Right ventricle myocardium superior (tissue), 1 donor: ENCODE measurements at regions of chr2 and their contacts with region 1.

Region 1: DNA sequence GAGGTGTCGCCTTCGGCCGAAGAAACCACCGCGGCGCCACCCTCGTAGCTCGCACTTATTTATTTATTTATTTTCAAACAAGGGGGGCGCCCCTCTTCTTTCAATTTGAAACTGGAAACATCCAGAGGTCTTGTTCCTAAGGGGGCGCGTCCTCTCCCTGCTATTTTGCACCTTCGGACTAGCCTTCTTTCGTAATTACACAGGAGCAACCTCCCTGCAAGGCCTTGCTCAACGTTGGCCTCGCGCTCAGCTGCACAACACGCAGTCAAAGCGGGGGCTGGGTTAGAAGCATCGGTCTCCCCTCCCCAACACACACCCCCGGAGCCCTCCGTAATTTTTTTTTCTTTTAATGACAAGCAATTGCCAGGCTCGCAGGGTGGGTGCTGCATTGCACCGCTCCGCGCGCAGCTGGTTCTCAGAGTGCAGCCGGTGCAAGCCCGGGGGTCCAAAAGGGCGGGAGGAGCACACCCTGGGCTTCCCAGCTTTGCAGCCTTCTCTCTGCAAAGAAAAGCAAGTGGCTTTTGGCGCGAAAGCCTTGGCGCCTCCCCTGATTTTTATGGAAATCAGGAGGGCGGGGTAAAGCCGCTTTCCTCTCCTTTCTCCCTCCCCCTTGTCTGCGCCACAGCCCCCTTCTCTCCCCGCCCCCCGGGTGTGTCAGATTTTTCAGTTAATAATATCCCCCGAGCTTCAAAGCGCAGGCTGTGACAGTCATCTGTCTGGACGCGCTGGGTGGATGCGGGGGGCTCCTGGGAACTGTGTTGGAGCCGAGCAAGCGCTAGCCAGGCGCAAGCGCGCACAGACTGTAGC is at the start of gene MYCN:
- DNase-seq: peak; percentile 53
- ATAC-seq: peak; percentile 46
- total RNA-seq, gene MYCN: 0.24 TPM

Region 2: GRCh38 chr2:16281451-16282336 is 341.6 kb after region 1 on chr2:
- intact Hi-C with region 1: loop called (anchors 5 kb)
- DNase-seq: no peak
- ATAC-seq: peak; percentile 67

Region 3: DNA sequence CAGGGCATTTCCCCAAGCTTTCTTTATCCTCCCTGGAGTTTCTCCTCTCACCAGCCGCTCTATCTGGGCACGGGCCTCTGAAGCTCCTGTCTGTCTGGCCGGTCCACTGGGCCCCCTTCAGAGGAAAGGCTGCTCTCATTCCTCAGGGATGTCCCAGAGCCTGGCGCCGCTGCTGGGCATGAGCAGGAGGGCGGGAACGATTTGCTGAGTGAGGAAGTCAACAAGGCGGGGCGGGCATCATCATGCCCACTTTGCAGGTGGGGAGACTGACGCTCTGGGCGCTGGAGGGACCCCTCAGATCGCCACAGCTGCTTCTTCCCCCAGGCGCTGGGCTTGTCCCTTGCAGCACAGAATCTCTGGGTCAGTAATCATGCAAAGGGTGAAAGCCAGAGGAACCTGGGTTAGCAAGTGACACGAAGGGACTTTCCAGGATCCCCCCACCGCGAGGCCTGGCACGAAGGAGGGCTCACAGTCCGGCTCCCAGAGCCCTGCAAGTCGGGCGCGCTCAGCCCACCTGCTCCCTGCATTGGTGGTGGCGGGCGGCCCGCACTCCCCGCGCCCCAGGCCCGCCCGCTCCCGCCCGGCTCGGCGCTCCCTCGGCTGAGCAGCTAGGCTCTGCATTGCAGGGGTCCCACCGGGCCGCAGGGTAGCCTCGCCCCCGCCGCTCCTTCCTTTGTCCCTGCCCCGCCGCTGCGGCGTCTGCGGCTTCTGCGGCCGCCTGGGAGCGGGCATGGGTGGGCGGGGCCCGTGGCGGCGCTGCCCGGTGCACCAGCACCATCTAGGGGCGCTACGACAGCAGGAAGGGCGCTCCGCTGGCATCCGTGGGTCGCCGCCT is 567.8 kb after region 1 on chr2:
- intact Hi-C with region 1: loop called (anchors 5 kb)
- DNase-seq: peak; percentile 50
- ATAC-seq: peak; percentile 94